Ascending aorta (tissue), 2 donors: ENCODE measurements at regions of chr1 and their contacts with region 1.

Region 1: GRCh38 chr1:155208541-155209311 is at the start of gene MTX1:
- DNase-seq: peak; percentile 77 to 97
- H3K4me3 ChIP-seq: peak within 1 kb of the TSS; percentile 77 to 79
- H3K27ac ChIP-seq: peak within 1 kb of the TSS; percentile 99 to 100
- H3K4me1 ChIP-seq: peaks cover 7 to 27% of the 10 kb centered on the region in 2 donors
- H3K27me3 ChIP-seq: no peaks in the 10 kb centered on the region
- CTCF ChIP-seq: peak in 1 of 3 experiments; percentile 7
- total RNA-seq, gene MTX1: 23.9 TPM

Region 2: GRCh38 chr1:155193275-155193990 is 15.3 kb before region 1 on chr1:
- intact Hi-C with region 1: loop called (anchors 1 kb)
- DNase-seq: peak; percentile 61 to 94
- H3K4me3 ChIP-seq: peak overlapping the region; percentile 59 to 69
- H3K27ac ChIP-seq: peak overlapping the region; percentile 84 to 87
- H3K4me1 ChIP-seq: peaks cover 19 to 20% of the 10 kb centered on the region in 2 donors
- H3K27me3 ChIP-seq: no peaks in the 10 kb centered on the region
- CTCF ChIP-seq: peak; percentile 96 to 99 (median 98)

Region 3: DNA sequence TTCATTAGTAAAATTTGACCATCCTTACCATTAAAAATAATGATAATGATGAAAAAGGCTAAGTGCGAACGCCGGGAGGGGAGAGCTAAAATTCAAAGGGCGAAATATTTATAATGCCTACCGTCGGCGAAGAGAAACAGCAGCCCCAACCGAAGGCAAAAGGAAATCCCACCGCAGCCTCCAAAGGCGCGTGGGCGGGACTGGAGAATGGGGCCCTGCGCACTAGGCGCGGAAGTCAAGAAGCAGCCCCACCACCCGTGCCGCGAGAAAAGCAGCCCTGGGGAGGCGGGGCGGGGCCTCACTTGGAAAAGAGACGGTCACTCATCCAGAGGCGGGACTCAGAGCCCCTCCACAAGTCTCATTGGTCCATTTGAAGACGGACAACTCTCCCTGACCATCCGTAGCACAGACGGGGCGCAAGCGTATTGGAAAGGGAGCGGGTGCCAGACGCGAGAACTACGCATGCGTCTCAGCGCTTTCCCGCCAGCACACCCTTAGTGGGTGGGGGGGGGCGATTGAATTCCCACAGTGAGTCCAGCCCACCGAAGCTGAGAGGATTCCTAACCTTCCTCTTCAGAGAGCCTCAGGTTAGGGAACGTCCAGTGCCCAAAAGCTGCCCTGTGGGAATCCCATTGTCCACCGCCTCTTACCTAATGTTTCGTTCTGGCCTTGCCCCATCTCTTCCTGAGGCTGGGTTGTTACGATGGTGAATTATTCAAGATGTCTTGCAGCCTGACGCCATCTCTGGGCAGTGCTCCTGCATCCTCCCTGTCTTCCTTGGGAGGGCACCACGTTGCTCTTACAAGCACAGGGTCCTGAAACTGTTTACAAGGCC is 18.8 kb after region 1 on chr1:
- intact Hi-C with region 1: loop called (anchors 1 kb)
- DNase-seq: peak; percentile 96 to 99
- H3K4me3 ChIP-seq: peak overlapping the region; percentile 65 to 67
- H3K27ac ChIP-seq: peak overlapping the region; percentile 79 to 86
- H3K4me1 ChIP-seq: peaks cover 3 to 36% of the 10 kb centered on the region in 2 donors
- H3K27me3 ChIP-seq: no peaks in the 10 kb centered on the region
- CTCF ChIP-seq: no peak

Region 4: GRCh38 chr1:155244368-155245162 is 35.8 kb after region 1 on chr1:
- intact Hi-C with region 1: loop called (anchors 1 kb)
- DNase-seq: peak; percentile 97 to 99
- H3K4me3 ChIP-seq: peak overlapping the region; percentile 69 to 80
- H3K27ac ChIP-seq: peak overlapping the region; percentile 83 to 92
- H3K4me1 ChIP-seq: peaks cover 3 to 28% of the 10 kb centered on the region in 2 donors
- H3K27me3 ChIP-seq: no peaks in the 10 kb centered on the region
- CTCF ChIP-seq: peak; percentile 27 to 99 (median 58)

Region 5: GRCh38 chr1:155420788-155421187 is 212.1 kb after region 1 on chr1:
- intact Hi-C with region 1: no loop called
- DNase-seq: no peak
- H3K4me3 ChIP-seq: no peak overlapping the region
- H3K27ac ChIP-seq: no peak overlapping the region
- H3K4me1 ChIP-seq: no peaks in the 10 kb centered on the region
- H3K27me3 ChIP-seq: no peaks in the 10 kb centered on the region
- CTCF ChIP-seq: no peak

Region 6: DNA sequence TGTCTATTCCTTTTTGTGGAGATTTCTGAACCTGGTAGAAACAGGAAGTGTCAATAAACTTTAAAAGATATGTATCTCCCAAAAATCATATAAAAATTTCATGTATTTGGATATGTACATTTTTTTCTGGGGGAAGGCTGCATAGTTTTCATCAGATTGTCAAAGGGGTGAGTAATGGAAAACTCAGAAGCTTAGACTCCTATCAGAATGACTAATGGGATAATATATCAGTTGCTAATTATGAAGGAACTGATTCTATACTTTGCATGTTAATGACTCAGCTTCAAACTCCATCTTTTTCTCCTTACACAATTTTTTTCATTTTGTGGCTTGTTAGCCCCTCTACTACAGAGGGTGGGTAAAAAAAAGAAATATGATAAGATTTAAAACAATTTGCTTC is 592.4 kb after region 1 on chr1:
- intact Hi-C with region 1: no loop called
- DNase-seq: no peak
- H3K4me3 ChIP-seq: no peak overlapping the region
- H3K27ac ChIP-seq: no peak overlapping the region
- H3K4me1 ChIP-seq: no peaks in the 10 kb centered on the region
- H3K27me3 ChIP-seq: no peaks in the 10 kb centered on the region
- CTCF ChIP-seq: no peak